Right ventricle myocardium superior (tissue), 1 donor: ENCODE measurements at regions of chr6 and their contacts with region 1.

Region 1: GRCh38 chr6:107982486-107982885 is 24.5 kb upstream of the SEC63 start:
- DNase-seq: no peak
- ATAC-seq: no peak

Region 2: DNA sequence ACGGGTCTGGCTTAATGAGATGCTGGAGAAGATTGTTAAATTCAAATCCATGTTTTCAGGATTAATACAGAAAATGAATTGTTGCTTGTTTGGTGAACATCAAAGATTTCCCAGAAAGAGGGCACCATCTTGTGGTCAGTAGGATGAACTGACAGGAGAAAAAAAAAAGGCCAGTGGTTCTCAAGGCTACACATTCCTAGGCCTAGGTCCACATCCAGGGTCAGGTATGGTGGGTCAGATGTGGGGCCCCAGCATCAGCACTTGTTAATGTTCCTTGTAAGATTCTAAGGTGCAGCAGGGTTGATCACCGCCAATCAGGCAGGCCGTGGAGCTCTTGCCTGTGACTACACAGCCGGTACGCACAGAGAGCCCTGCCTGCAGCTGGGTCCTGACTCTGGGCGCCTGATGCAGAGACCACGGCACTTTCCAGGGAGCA is 544.3 kb after region 1 on chr6:
- intact Hi-C with region 1: loop called (anchors 5 kb)
- DNase-seq: no peak
- ATAC-seq: peak; percentile 66